ENCODE measurements at regions of chr12 and their contacts with region 1.

Region 1: DNA sequence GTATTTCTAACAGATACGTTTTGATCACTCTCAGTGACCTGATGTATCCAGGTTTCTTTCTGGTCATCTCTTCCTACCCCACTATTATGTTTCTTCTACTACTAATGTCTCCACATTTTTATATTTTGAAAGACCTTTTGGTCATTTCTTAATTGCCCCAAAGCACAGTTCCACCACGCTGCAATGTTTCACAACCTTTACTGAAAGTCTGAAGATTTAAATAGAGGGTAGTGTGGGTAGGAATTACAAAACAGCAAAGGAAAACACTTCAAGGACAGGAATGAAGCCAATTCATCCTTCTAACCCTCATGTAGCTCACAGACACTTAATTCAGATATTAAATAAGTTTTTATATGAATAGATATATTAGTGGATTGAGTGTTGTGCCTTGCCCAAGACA is 36.1 kb upstream of the SLC16A7 start:
- DNase-seq: no peak
- H3K4me3 ChIP-seq: no peak overlapping the region
- H3K27ac ChIP-seq: no peak overlapping the region
- H3K4me1 ChIP-seq: no peaks in the 10 kb centered on the region
- H3K27me3 ChIP-seq: no peaks in the 10 kb centered on the region
- CTCF ChIP-seq: no peak

Region 2: DNA sequence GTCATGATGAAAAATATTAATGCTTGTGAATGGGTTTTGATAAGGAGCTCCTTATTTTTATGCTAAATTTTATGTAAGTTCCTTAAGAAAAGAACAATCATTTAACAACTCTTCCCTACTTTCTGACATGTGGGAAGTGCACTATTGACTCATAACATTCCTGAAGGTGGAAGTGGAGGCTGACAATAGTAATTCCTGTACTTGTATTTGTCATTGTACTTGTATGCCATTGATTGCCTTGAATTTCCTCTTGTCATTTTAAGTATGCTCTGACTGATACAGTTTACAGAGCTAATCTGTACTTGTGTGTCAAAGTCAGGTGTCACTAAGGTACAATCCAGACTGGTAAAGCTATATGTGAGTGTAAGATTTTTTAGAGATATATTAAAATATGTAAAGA is 476.1 kb after region 1 on chr12:
- intact Hi-C with region 1: loop called (anchors 10 kb)
- DNase-seq: no peak
- H3K4me3 ChIP-seq: no peak overlapping the region
- H3K27ac ChIP-seq: no peak overlapping the region
- H3K4me1 ChIP-seq: no peaks in the 10 kb centered on the region
- H3K27me3 ChIP-seq: no peaks in the 10 kb centered on the region
- CTCF ChIP-seq: no peak